Dendritic cell treated with granulocyte-macrophage colony-stimulating factor and Interleukin-4, amounts not matched to agents 40 ng/mL and 50 ng/mL, for 4 days (primary cell): ENCODE measurements at regions of chr13 and their contacts with region 1.

Region 1: GRCh38 chr13:59970847-59971246 is 192.9 kb downstream of the DIAPH3 start:
- H3K4me3 Mint-ChIP-seq: no peak overlapping the region
- H3K27ac Mint-ChIP-seq: no peak overlapping the region
- H3K4me1 Mint-ChIP-seq: peaks cover 4% of the 10 kb centered on the region
- H3K27me3 Mint-ChIP-seq: no peaks in the 10 kb centered on the region

Region 2: DNA sequence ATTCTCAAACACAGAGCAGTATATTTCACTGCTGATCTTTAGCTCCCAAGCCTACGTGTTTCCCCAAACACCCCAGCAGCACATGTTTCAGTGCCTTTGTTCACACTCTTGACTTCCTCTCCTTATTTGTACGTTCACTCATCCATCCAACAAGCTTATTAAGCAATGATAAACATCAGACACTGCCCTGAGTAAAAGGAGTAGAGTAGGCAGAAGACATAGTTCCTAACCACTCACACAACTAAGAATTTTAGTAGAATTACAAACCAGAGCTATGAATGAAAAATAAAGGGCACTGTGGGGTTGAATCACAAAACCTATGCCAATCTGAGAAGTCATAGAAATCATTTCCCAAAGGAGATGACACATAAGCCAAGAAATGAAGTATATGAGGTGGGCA is 20.6 kb before region 1 on chr13:
- intact Hi-C with region 1: loop called (anchors 1 kb)
- H3K4me3 Mint-ChIP-seq: no peak overlapping the region
- H3K27ac Mint-ChIP-seq: no peak overlapping the region
- H3K4me1 Mint-ChIP-seq: no peaks in the 10 kb centered on the region
- H3K27me3 Mint-ChIP-seq: no peaks in the 10 kb centered on the region